GM12878 (cell line): ENCODE measurements at regions of chr18 and their contacts with region 1.

Region 1: DNA sequence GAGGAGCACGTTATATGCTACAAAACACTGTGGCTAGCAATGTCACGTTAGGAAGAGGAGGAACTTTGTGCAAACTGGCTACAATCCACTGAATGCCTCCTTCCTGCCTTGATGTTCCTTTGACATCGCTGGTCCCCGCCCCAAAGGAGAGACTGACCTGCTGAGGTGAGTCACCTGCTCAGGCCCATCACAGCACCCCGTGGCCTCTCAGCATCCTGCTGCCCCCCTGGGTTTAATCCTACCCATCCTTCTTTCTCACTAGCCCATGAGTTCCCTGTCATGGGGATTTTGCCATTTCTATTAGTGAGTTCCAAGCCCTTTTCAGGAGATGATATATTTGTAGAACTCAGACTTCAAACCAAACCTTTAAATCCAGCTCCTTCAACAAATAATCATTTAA is 16.2 kb downstream of the DLGAP1 start:
- DNase-seq: no peak
- ATAC-seq: peak; percentile 5
- H3K4me3 ChIP-seq: no peak overlapping the region
- H3K27ac ChIP-seq: no peak overlapping the region
- H3K4me1 ChIP-seq: no peaks in the 10 kb centered on the region
- H3K27me3 ChIP-seq: no peaks in the 10 kb centered on the region
- CTCF ChIP-seq: no peak
- EP300 ChIP-seq: no peak
- POLR2A ChIP-seq: no peak
- RAD21 ChIP-seq: no peak

Region 2: DNA sequence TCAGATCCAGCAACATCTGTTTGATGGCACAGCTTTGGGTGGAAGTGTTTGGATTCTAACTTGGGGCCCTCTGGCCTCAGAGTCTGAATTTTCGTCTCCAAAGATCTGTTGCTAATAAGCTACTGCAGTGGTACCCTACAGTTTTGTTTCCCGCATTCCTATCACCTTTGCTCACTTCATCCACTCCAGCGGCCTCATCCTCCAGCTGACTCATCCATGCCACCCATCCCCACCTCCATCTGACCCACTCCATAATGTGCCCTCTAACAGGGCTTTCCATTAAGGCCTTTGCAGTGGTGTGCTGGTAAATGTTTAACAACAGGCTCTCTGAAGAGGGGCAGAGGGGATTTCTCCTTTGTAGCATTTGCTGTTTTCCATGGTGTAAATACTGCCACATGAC is 763.5 kb before region 1 on chr18:
- CTCF ChIA-PET with region 1: no interaction called
- POLR2A ChIA-PET with region 1: no interaction called
- RAD21 ChIA-PET with region 1: no interaction called
- SMC1A ChIA-PET with region 1: no interaction called
- in situ Hi-C with region 1: no loop called
- intact Hi-C with region 1: no loop called
- DNase-seq: no peak
- ATAC-seq: no peak
- H3K4me3 ChIP-seq: no peak overlapping the region
- H3K27ac ChIP-seq: no peak overlapping the region
- H3K4me1 ChIP-seq: no peaks in the 10 kb centered on the region
- H3K27me3 ChIP-seq: no peaks in the 10 kb centered on the region
- CTCF ChIP-seq: no peak
- EP300 ChIP-seq: no peak
- POLR2A ChIP-seq: no peak
- RAD21 ChIP-seq: no peak

Region 3: GRCh38 chr18:4450065-4450658 is 11.2 kb after region 1 on chr18:
- CTCF ChIA-PET with region 1: interaction called, 5 read pairs
- POLR2A ChIA-PET with region 1: interaction called, 7 read pairs
- RAD21 ChIA-PET with region 1: interaction called, 10 read pairs
- SMC1A ChIA-PET with region 1: interaction called, 31 read pairs
- in situ Hi-C with region 1: no loop called
- intact Hi-C with region 1: no loop called
- DNase-seq: no peak
- ATAC-seq: peak; percentile 13
- H3K4me3 ChIP-seq: no peak overlapping the region
- H3K27ac ChIP-seq: no peak overlapping the region
- H3K4me1 ChIP-seq: no peaks in the 10 kb centered on the region
- H3K27me3 ChIP-seq: no peaks in the 10 kb centered on the region
- CTCF ChIP-seq: peak in 2 of 3 experiments; percentile 4 to 43; a peak in 2 of 6 replicates
- EP300 ChIP-seq: no peak
- POLR2A ChIP-seq: no peak
- RAD21 ChIP-seq: no peak

Region 4: DNA sequence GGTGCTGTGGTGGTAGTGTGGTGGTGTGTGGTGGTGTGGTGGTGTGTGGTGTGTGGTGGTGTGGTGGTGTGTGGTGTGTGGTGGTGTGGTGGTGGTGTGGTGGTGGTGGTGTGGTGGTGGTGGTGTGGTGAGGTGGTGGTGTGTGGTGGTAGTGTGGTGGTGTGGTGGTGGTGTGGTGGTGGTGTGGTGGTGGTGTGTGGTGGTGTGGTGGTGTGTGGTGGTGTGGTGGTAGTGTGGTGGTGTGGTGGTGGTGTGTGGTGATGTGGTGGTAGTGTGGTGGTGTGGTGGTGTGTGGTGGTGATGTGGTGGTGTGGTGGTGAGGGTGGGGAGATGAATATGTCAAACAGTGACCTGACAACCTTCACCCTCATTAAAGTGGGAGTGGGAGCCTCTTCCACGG is 71.8 kb after region 1 on chr18:
- CTCF ChIA-PET with region 1: no interaction called
- POLR2A ChIA-PET with region 1: no interaction called
- RAD21 ChIA-PET with region 1: no interaction called
- SMC1A ChIA-PET with region 1: no interaction called
- in situ Hi-C with region 1: no loop called
- intact Hi-C with region 1: no loop called
- DNase-seq: no peak
- ATAC-seq: peak; percentile 23; the same call in 2 of the 3 replicates
- H3K4me3 ChIP-seq: no peak overlapping the region
- H3K27ac ChIP-seq: no peak overlapping the region
- H3K4me1 ChIP-seq: no peaks in the 10 kb centered on the region
- H3K27me3 ChIP-seq: no peaks in the 10 kb centered on the region
- CTCF ChIP-seq: no peak
- EP300 ChIP-seq: no peak
- POLR2A ChIP-seq: no peak
- RAD21 ChIP-seq: no peak

Region 5: DNA sequence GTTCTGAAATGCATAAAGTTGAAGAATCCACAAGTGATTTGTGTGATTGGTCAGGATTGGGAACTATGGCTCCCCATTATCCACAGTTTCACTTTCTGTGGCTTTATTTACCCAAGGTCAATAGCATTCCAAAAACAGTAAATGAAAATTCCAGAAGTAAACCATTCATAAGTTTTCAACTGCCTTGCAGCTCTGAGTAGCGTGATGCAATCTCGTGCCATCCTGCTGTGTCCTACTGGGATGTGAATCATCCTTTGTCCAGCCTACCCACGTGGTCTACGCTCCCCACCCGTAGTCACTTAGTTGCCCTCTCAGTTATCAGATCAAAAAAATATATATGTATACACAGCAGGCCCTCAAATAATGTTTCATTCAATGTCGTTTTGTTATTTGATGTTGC is 105.2 kb after region 1 on chr18:
- CTCF ChIA-PET with region 1: no interaction called
- POLR2A ChIA-PET with region 1: no interaction called
- RAD21 ChIA-PET with region 1: no interaction called
- SMC1A ChIA-PET with region 1: no interaction called
- in situ Hi-C with region 1: no loop called
- intact Hi-C with region 1: no loop called
- DNase-seq: no peak
- ATAC-seq: no peak
- H3K4me3 ChIP-seq: no peak overlapping the region
- H3K27ac ChIP-seq: no peak overlapping the region
- H3K4me1 ChIP-seq: no peaks in the 10 kb centered on the region
- H3K27me3 ChIP-seq: no peaks in the 10 kb centered on the region
- CTCF ChIP-seq: no peak
- EP300 ChIP-seq: no peak
- POLR2A ChIP-seq: no peak
- RAD21 ChIP-seq: no peak